ENCODE measurements at regions of chr9 and their contacts with region 1.

Region 1: DNA sequence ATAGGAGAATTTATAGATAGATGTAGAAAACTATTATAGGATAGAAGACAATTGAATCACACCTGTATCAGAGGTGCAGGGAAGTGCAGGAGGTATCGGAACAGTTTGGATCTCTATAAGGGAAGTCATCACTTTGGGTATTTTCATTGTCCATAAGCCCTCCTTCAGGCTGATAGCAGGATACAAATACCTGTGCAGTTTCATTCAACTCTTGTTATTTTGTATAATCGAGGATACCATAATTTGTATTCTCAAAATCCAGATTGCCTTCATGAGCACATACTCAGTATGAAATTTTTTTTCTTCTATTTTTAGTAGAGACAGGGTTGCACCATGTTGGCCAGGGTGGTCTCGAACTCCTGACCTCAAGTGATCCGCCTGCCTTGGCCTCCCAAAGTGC is 289.1 kb downstream of the AOPEP start:
- DNase-seq: no peak
- ATAC-seq: no peak
- H3K4me3 Mint-ChIP-seq: no peak overlapping the region
- H3K27ac Mint-ChIP-seq: no peak overlapping the region
- H3K4me1 Mint-ChIP-seq: no peaks in the 10 kb centered on the region
- H3K27me3 Mint-ChIP-seq: no peaks in the 10 kb centered on the region

Region 2: DNA sequence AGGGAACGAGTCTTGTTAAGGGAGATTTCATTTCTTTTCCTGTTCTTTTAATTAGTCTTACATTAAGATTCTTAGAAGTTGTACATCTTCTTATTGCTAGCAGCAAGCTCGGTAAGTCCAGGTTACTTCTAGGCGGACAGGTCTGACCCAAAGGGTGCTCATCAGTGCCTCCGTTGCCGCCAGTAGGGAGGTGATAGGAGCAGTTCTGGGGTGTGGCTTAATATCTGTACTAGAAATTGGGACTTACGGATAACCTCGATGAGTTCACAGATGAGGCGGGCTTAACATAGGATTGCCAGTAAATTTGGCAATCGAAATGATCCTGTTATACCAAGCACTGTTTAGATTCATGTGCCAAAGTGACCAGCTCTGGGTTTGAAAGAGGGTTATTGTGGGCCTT is 23.1 kb after region 1 on chr9:
- CTCF ChIA-PET with region 1: no interaction called
- POLR2A ChIA-PET with region 1: interaction called, 15 read pairs
- intact Hi-C with region 1: no loop called
- DNase-seq: no peak
- ATAC-seq: no peak
- H3K4me3 Mint-ChIP-seq: no peak overlapping the region
- H3K27ac Mint-ChIP-seq: no peak overlapping the region
- H3K4me1 Mint-ChIP-seq: no peaks in the 10 kb centered on the region
- H3K27me3 Mint-ChIP-seq: no peaks in the 10 kb centered on the region

Region 3: DNA sequence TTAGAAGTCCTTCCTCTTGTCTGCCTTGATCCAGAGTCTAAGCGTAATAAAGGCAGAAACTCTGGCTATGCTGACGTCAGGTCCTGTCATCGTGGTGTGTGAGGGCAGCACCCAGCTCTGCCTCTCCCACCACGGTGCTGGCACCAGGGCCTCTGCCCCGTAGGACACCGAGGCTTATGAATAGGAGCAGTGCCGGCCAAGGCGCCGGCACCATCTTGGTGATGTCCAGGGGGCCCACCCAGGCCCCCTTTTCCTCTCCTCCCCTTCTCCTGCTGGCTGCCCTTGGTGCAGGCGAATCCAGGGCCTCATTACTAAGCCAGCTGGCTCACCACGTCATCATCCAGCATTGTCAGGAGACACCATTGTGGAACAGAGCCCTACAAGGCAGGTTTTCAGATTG is 49.7 kb after region 1 on chr9:
- CTCF ChIA-PET with region 1: no interaction called
- POLR2A ChIA-PET with region 1: no interaction called
- intact Hi-C with region 1: no loop called
- DNase-seq: no peak
- ATAC-seq: no peak
- H3K4me3 Mint-ChIP-seq: no peak overlapping the region
- H3K27ac Mint-ChIP-seq: no peak overlapping the region
- H3K4me1 Mint-ChIP-seq: no peaks in the 10 kb centered on the region
- H3K27me3 Mint-ChIP-seq: no peaks in the 10 kb centered on the region